ENCODE measurements at regions of chr16 and their contacts with region 1.

Region 1: DNA sequence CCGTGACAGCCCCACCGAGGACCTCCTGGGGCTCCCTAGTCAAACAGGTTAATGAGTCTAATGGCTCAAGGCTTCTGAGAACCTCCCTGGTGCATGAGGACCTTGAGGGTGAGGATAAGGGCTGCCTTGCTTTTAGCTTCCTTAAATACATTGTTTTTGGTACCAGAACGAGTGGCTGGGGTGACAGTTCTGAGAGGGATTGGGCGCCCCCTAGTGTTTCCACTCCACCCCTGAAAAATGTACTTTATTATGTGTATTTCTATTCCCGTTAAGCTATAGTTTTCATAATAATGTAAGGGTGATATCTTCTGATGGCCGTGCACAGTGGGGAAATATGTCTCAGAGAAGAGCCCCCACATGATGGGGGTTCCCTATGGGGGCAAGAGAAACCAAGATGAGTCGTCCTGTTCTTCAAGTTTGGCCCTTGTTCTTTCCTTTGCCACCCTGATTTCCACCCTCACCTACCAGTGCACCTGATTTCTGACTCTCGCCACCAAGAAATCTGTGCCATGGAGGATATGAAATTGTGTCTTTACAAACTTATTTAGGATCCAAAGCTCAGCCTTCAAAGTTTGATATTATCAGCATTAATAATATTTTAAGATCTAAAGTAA is 14.5 kb upstream of the VWA3A start:
- DNase-seq: peak; percentile 76
- H3K4me3 Mint-ChIP-seq: no peak overlapping the region
- H3K27ac Mint-ChIP-seq: no peak overlapping the region
- H3K4me1 Mint-ChIP-seq: peaks cover 3% of the 10 kb centered on the region
- H3K27me3 Mint-ChIP-seq: no peaks in the 10 kb centered on the region

Region 2: DNA sequence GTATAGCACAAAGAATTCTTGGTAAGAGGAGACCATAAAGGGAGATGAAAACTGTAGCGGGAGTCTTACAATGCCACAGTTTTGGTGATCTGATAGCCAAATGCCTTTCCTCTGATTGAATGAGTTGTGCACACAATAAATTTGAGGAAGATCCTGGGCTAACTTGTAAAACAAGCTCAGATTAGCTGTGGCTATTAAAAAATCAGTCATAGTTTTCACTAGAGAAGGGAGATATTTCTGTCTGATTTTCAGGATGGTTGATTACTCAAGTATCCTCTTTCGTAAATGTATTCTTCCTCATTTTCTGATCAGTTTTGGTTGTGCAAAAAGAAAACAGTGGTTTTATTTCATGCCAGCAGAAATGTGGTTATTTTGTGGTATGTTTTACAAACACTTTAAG is 487.5 kb before region 1 on chr16:
- CTCF ChIA-PET with region 1: no interaction called
- POLR2A ChIA-PET with region 1: no interaction called
- DNase-seq: no peak
- H3K4me3 Mint-ChIP-seq: no peak overlapping the region
- H3K27ac Mint-ChIP-seq: no peak overlapping the region
- H3K4me1 Mint-ChIP-seq: no peaks in the 10 kb centered on the region
- H3K27me3 Mint-ChIP-seq: no peaks in the 10 kb centered on the region

Region 3: GRCh38 chr16:21989133-21989532 is 88.7 kb before region 1 on chr16:
- CTCF ChIA-PET with region 1: interaction called, 48 read pairs
- POLR2A ChIA-PET with region 1: interaction called, 3 read pairs
- DNase-seq: no peak
- H3K4me3 Mint-ChIP-seq: no peak overlapping the region
- H3K27ac Mint-ChIP-seq: no peak overlapping the region
- H3K4me1 Mint-ChIP-seq: peaks cover 41% of the 10 kb centered on the region
- H3K27me3 Mint-ChIP-seq: no peaks in the 10 kb centered on the region

Region 4: GRCh38 chr16:22007509-22008214 is 70.1 kb before region 1 on chr16 and contains the start of gene MOSMO:
- CTCF ChIA-PET with region 1: interaction called, 319 read pairs
- POLR2A ChIA-PET with region 1: interaction called, 13 read pairs
- DNase-seq: peak; percentile 69
- H3K4me3 Mint-ChIP-seq: peak within 1 kb of the TSS; percentile 83
- H3K27ac Mint-ChIP-seq: peak within 1 kb of the TSS; percentile 49
- H3K4me1 Mint-ChIP-seq: peaks cover 34% of the 10 kb centered on the region
- H3K27me3 Mint-ChIP-seq: no peaks in the 10 kb centered on the region
- total RNA-seq, gene MOSMO: 12.1 to 13.0 TPM

Region 5: DNA sequence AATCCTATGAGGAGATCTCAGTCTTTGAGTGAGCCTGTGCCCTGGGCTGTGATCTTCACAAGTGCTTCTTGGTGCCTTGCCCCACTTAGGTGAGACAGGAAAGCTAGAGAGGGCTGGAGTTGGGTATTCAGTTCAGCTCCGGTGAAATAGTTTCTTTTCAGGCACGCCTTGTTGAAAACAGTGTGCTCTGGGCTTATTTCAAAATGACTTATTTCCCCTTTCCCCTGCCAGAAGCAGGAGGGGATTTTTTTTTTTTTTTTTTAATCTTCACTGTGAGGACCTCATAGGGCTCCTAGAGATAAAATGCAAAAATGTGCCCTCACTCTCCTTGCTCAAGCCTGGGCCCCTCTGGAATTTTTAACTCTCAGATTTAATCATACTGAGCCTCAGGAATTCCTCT is 42.7 kb before region 1 on chr16:
- CTCF ChIA-PET with region 1: interaction called, 12 read pairs
- POLR2A ChIA-PET with region 1: no interaction called
- DNase-seq: no peak
- H3K4me3 Mint-ChIP-seq: no peak overlapping the region
- H3K27ac Mint-ChIP-seq: no peak overlapping the region
- H3K4me1 Mint-ChIP-seq: peaks cover 36% of the 10 kb centered on the region
- H3K27me3 Mint-ChIP-seq: no peaks in the 10 kb centered on the region

Region 6: GRCh38 chr16:22063888-22064467 is 13.8 kb before region 1 on chr16:
- CTCF ChIA-PET with region 1: interaction called, 48 read pairs
- POLR2A ChIA-PET with region 1: interaction called, 4 read pairs
- DNase-seq: no peak
- H3K4me3 Mint-ChIP-seq: no peak overlapping the region
- H3K27ac Mint-ChIP-seq: no peak overlapping the region
- H3K4me1 Mint-ChIP-seq: peaks cover 4% of the 10 kb centered on the region
- H3K27me3 Mint-ChIP-seq: no peaks in the 10 kb centered on the region

Region 7: GRCh38 chr16:22098405-22099255 is 20.8 kb after region 1 on chr16:
- CTCF ChIA-PET with region 1: interaction called, 14 read pairs
- POLR2A ChIA-PET with region 1: no interaction called
- DNase-seq: no peak
- H3K4me3 Mint-ChIP-seq: no peak overlapping the region
- H3K27ac Mint-ChIP-seq: no peak overlapping the region
- H3K4me1 Mint-ChIP-seq: peaks cover 1% of the 10 kb centered on the region
- H3K27me3 Mint-ChIP-seq: peaks cover 25% of the 10 kb centered on the region

Region 8: GRCh38 chr16:22190776-22191531 is 113.1 kb after region 1 on chr16:
- CTCF ChIA-PET with region 1: interaction called, 41 read pairs
- POLR2A ChIA-PET with region 1: interaction called, 11 read pairs
- DNase-seq: peak; percentile 99
- H3K4me3 Mint-ChIP-seq: peak overlapping the region; percentile 87
- H3K27ac Mint-ChIP-seq: peak overlapping the region; percentile 99
- H3K4me1 Mint-ChIP-seq: peaks cover 55% of the 10 kb centered on the region
- H3K27me3 Mint-ChIP-seq: peaks cover 1% of the 10 kb centered on the region

Measured in activated CD4-positive, alpha-beta memory T cell treated with anti-CD3 and anti-CD28 coated beads, Interleukin-2, amount 10 ng/mL, durations not matched to agents 7 days and 5 days (primary cell).